ENCODE measurements at regions of chrX and their contacts with region 1.

Region 1: GRCh38 chrX:15973299-15973698 is 118.7 kb upstream of the AP1S2 start:
- DNase-seq: peak; percentile 75
- H3K4me3 Mint-ChIP-seq: no peak overlapping the region
- H3K27ac Mint-ChIP-seq: no peak overlapping the region
- H3K4me1 Mint-ChIP-seq: no peaks in the 10 kb centered on the region
- H3K27me3 Mint-ChIP-seq: peaks cover 59% of the 10 kb centered on the region
- CTCF ChIP-seq: peak; percentile 29

Region 2: DNA sequence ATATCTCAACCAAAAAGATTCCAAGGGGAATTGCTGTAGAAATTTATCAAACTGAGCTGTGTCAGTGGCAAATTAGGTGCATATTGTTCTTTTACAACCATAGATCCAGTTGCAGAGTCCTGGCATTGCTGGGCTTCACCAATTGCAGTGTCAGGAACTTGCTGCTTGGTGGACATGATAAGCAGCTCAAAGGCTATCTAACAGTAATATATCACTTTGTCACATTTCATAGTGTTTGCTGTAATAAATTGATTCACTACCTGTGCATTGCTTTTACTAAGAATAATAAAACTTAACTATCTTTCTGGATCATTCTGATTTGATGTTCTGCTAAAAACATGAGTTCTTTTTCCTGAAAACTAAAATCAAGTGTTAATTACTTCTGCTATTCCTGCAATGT is 341.7 kb before region 1 on chrX:
- CTCF ChIA-PET with region 1: no interaction called
- POLR2A ChIA-PET with region 1: no interaction called
- intact Hi-C with region 1: no loop called
- DNase-seq: no peak
- H3K4me3 Mint-ChIP-seq: no peak overlapping the region
- H3K27ac Mint-ChIP-seq: no peak overlapping the region
- H3K4me1 Mint-ChIP-seq: no peaks in the 10 kb centered on the region
- H3K27me3 Mint-ChIP-seq: peaks cover 58% of the 10 kb centered on the region
- CTCF ChIP-seq: no peak

Region 3: GRCh38 chrX:15761564-15762191 is 211.6 kb before region 1 on chrX:
- CTCF ChIA-PET with region 1: no interaction called
- POLR2A ChIA-PET with region 1: no interaction called
- intact Hi-C with region 1: loop called (anchors 10 kb)
- DNase-seq: peak; percentile 54
- H3K4me3 Mint-ChIP-seq: no peak overlapping the region
- H3K27ac Mint-ChIP-seq: no peak overlapping the region
- H3K4me1 Mint-ChIP-seq: no peaks in the 10 kb centered on the region
- H3K27me3 Mint-ChIP-seq: no peaks in the 10 kb centered on the region
- CTCF ChIP-seq: peak; percentile 63

Measured in MCF 10A (cell line).